CD4-positive, alpha-beta memory T cell (primary cell): ENCODE measurements at regions of chr1 and their contacts with region 1.

Region 1: GRCh38 chr1:162035241-162035640 is 11.6 kb upstream of the OLFML2B start:
- DNase-seq: no peak
- H3K4me3 ChIP-seq: no peak overlapping the region
- H3K4me3 Mint-ChIP-seq: no peak overlapping the region
- H3K27ac ChIP-seq: no peak overlapping the region
- H3K27ac Mint-ChIP-seq: no peak overlapping the region
- H3K4me1 ChIP-seq: no peaks in the 10 kb centered on the region
- H3K4me1 Mint-ChIP-seq: peaks cover 0 to 3% (median 3%) of the 10 kb centered on the region in 4 donors
- H3K27me3 ChIP-seq: peaks cover 11% of the 10 kb centered on the region
- H3K27me3 Mint-ChIP-seq: peaks cover 2 to 29% of the 10 kb centered on the region in 2 donors

Region 2: DNA sequence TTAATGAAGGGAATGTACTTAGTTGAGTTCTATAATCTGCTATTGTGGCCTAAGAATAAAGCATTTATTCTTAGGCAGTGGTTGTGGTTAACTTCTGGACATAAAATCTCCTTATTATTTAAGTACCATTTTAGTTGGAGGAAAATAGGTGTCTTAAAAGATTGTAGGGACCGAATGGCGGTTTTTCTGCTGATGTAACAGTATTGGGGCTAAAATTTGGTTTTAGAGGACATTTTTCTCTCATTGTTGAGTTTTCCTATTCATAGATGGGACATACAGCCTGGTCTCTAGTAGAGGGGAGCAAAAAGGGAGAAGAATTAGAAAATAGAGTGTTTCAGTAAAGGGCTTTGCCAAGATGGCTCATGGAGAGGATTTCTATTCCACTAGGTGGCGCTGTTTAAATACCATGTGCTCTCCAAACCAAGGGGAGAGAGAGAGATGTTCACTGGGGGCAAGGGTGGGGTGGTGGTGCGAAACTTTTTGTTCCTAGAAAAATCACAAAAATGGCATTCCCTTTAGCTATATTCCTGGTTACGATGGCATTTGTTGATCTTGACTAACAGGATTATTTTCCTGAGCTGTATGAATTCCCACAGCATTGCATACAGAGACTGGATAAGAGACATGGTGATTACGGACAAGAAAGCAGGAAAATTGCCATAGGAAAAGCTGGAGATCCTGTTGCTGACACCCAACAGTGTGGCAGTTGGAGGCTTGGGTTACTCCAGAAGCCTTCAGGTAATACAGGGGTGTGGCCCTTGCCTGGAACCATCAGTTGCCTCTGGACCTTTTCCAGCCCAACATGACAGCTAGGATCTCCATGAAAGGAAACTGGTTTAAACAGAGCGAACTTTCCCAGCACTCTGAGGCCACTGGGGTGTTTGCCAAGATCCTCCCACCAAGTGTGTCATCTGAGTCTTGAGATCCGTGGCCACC is 548.2 kb before region 1 on chr1:
- CTCF ChIA-PET with region 1: interaction called, 3 read pairs
- POLR2A ChIA-PET with region 1: no interaction called
- intact Hi-C with region 1: loop called (anchors 10 kb)
- DNase-seq: peak; percentile 60 to 67 (median 64)
- H3K4me3 ChIP-seq: no peak overlapping the region
- H3K4me3 Mint-ChIP-seq: no peak overlapping the region
- H3K27ac ChIP-seq: no peak overlapping the region
- H3K27ac Mint-ChIP-seq: peak overlapping the region in 1 of 7 donors; percentile 57
- H3K4me1 ChIP-seq: peaks cover 8% of the 10 kb centered on the region
- H3K4me1 Mint-ChIP-seq: peaks cover 11 to 28% (median 18%) of the 10 kb centered on the region in 4 donors
- H3K27me3 ChIP-seq: peaks cover 1% of the 10 kb centered on the region
- H3K27me3 Mint-ChIP-seq: peaks cover 7 to 18% of the 10 kb centered on the region in 2 donors

Region 3: DNA sequence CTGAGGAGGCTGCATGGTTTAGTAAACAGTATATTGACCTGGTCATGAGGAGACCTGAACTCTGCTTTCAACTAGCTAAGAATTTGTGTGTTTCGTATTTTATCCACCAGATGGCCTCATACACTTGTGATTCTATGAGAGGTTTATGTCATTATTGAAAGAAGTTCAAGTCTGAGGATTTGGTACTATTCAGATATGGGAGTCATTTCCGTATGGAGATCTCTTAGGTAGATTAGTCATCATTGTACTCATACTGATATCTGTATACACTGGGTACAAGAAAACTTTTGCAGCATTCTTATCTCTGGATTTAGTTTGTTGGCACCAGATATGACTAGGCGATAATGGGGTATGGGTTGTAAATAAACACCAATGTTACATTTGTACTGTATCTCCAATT is 242.5 kb before region 1 on chr1:
- CTCF ChIA-PET with region 1: interaction called, 213 read pairs
- POLR2A ChIA-PET with region 1: interaction called, 3 read pairs
- intact Hi-C with region 1: loop called (anchors 1 kb)
- DNase-seq: peak in 4 of 5 donors; percentile 42 to 49 (median 44)
- H3K4me3 ChIP-seq: no peak overlapping the region
- H3K4me3 Mint-ChIP-seq: no peak overlapping the region
- H3K27ac ChIP-seq: no peak overlapping the region
- H3K27ac Mint-ChIP-seq: peak overlapping the region in 1 of 7 donors; percentile 10
- H3K4me1 ChIP-seq: no peaks in the 10 kb centered on the region
- H3K4me1 Mint-ChIP-seq: peaks cover 3 to 7% (median 6%) of the 10 kb centered on the region in 4 donors
- H3K27me3 ChIP-seq: no peaks in the 10 kb centered on the region
- H3K27me3 Mint-ChIP-seq: no peaks in the 10 kb centered on the region

Region 4: DNA sequence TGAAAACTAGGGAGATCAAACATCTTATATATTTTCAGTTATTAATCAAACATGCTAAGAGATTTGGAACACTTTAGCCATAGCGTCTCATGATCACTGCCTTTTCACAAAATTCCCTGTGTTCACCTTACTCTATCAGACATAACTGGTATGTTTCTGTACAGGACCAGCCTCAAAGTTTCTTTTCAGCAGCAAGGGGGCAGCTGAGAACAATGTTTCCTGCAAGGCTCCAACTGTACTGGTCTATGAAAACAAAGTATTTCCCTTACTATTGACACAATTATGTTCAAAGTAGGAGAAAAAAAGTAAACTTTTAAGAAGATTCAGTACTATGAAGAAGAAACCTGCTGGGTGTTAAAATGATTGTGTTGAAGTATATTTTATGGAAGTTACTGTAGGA is 170.7 kb before region 1 on chr1:
- CTCF ChIA-PET with region 1: interaction called, 15 read pairs
- POLR2A ChIA-PET with region 1: no interaction called
- intact Hi-C with region 1: no loop called
- DNase-seq: peak in 2 of 5 donors; percentile 2 to 5
- H3K4me3 ChIP-seq: no peak overlapping the region
- H3K4me3 Mint-ChIP-seq: no peak overlapping the region
- H3K27ac ChIP-seq: no peak overlapping the region
- H3K27ac Mint-ChIP-seq: no peak overlapping the region
- H3K4me1 ChIP-seq: no peaks in the 10 kb centered on the region
- H3K4me1 Mint-ChIP-seq: peaks cover 0 to under 1% (median 0%) of the 10 kb centered on the region in 4 donors
- H3K27me3 ChIP-seq: no peaks in the 10 kb centered on the region
- H3K27me3 Mint-ChIP-seq: no peaks in the 10 kb centered on the region

Region 5: DNA sequence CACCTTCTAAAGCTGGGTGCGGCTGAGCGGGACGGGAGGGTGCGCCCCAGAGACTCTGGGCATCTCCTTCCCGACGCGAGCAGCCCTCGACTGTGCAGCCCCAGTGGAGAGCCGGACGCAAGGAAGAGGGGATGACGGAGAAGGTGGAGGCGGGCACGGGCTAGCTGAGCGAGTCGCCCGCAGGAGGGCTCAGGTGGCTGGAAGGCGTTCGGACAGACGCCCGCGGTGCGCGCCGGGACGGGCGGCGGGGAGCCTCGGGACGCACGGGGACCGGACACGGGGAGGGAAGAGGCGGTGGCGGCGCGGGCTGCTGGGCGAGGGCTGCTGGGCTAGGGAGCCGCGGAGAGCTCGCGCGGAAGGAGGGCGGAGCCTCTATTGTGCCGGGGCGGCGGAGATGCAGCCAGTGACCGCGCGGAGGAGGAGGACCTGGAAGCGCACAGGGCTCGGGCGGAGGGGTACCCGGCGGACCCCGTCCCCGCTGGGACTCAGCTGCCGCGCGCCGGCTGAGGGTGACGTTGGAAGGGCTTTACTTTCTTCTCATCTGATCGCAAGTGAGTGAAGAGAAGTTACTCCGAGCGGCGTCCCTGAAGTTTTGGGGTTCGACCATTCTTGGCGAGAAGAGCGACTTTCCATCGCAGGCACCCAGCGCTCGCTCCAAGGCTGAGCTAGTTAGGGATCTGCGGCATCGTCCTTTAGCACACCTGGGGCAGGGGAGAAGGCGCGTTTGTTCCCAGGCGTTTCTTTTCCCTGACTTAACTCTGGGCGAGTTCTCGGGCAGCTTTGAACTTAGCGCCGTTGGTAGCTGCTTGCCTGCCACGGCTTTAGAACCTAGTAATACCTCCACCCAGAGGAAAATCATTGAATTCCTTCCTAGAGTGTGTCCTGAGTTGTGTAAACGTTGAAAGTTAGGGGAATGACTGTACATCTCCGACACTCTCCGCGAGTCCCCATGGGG is 11.4 kb before region 1 on chr1 and contains the start of gene OLFML2B:
- CTCF ChIA-PET with region 1: interaction called, 35 read pairs
- POLR2A ChIA-PET with region 1: no interaction called
- intact Hi-C with region 1: no loop called
- DNase-seq: peak in 4 of 5 donors; percentile 30 to 33 (median 31)
- H3K4me3 ChIP-seq: peak within 1 kb of the TSS; percentile 49 to 63
- H3K4me3 Mint-ChIP-seq: peak within 1 kb of the TSS; percentile 86 to 95 (median 88)
- H3K27ac ChIP-seq: no peak within 1 kb of the TSS
- H3K27ac Mint-ChIP-seq: peak within 1 kb of the TSS in 2 of 7 donors; percentile 30 to 70
- H3K4me1 ChIP-seq: peaks cover 5% of the 10 kb centered on the region
- H3K4me1 Mint-ChIP-seq: peaks cover 3 to 13% (median 7%) of the 10 kb centered on the region in 4 donors
- H3K27me3 ChIP-seq: peaks cover 6% of the 10 kb centered on the region
- H3K27me3 Mint-ChIP-seq: peaks cover 17 to 40% of the 10 kb centered on the region in 2 donors
- total RNA-seq, gene OLFML2B: 0.36 to 0.58 TPM